Naive thymus-derived CD8-positive, alpha-beta T cell (primary cell): ENCODE measurements at regions of chr2 and their contacts with region 1.

Region 1: DNA sequence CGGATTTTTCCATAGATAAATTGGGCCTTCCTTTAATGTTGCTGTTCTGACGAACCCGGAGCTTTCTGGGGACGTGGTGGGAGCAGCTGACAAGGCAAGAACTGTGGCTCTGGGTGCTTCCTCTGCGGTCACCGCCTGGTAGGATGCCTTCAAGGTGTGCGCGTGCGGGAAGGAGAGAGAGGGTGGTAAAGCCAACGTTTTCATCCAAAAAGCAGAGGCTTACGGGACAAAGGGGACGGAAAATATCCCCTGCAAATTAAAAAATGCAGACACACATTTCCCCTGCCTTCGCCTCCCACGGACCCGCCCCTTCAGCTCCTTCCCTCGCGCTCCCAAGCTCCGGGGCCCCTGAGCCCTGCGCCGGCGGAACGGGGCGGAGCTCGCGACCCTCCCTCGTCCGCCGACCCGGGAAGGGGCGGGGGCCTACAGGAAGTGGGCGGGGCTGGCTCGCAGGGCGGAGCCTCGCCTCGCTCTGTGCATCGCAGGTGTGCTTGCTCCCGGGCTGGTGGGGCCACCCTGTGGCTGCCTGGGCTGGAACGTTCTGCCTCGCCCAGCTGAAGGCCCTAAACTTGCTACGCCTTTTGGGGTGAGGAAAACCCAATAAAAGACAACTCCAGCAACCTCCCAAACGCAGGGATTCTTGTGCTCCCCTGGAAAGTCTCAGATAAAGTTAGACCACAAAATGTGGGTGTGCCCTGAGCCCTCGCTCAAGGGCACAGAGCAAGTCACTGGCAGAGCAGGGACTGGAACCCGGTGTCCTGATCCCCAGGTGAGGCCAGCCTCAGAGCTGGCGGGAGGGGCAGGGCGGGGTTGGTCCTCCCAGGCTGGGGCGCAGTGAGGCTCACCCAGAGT is 25.4 kb upstream of the SLC66A3 start:
- DNase-seq: peak; percentile 74 to 89 (median 83)
- ATAC-seq: peak; percentile 88
- H3K4me3 Mint-ChIP-seq: peak overlapping the region; percentile 68 to 85 (median 80)
- H3K27ac Mint-ChIP-seq: peak overlapping the region; percentile 43 to 92 (median 83)
- H3K4me1 Mint-ChIP-seq: peaks cover 4 to 36% (median 19%) of the 10 kb centered on the region in 4 donors
- H3K27me3 Mint-ChIP-seq: no peaks in the 10 kb centered on the region

Region 2: GRCh38 chr2:11103984-11104793 is 25.6 kb before region 1 on chr2:
- POLR2A ChIA-PET with region 1: no interaction called
- DNase-seq: no peak
- ATAC-seq: no peak
- H3K4me3 Mint-ChIP-seq: peak overlapping the region in 3 of 10 donors; percentile 2 to 80 (median 28)
- H3K27ac Mint-ChIP-seq: peak overlapping the region in 3 of 10 donors; percentile 35 to 54 (median 48)
- H3K4me1 Mint-ChIP-seq: peaks cover 0 to 20% (median 3%) of the 10 kb centered on the region in 4 donors
- H3K27me3 Mint-ChIP-seq: peaks cover 0 to 13% (median 0%) of the 10 kb centered on the region in 5 donors

Region 3: GRCh38 chr2:11154923-11155380 is 25.1 kb after region 1 on chr2:
- POLR2A ChIA-PET with region 1: interaction called, 22 read pairs
- DNase-seq: peak; percentile 88 to 99 (median 97)
- ATAC-seq: peak; percentile 87 to 91
- H3K4me3 Mint-ChIP-seq: peak overlapping the region; percentile 71 to 89 (median 85)
- H3K27ac Mint-ChIP-seq: peak overlapping the region; percentile 63 to 94 (median 92)
- H3K4me1 Mint-ChIP-seq: peaks cover 6 to 29% (median 22%) of the 10 kb centered on the region in 4 donors
- H3K27me3 Mint-ChIP-seq: no peaks in the 10 kb centered on the region

Region 4: DNA sequence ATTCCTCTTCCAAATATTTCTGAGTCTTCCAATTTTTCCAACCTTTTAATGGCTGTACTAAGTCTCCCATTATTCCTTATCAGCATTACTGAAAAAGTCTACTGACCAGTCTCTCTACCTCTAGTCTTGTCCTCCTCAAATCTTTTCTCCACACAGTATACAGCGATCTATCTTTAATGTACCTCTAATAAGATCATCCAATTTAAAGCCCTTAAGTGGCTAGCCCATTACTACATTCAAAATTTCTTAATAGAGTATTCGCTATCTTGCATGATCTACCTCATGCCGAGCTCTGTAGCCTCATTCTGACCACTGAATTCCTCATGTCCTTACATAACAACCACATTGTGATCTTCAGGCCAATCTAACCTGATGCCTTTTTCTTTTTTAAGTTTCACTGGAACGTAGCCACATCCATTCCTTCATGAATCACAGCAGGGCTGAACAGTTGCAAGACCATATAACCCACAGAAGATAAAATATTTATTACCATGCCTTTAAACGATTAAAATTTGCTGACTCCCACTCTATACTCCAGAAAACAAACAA is 83.3 kb after region 1 on chr2:
- POLR2A ChIA-PET with region 1: no interaction called
- DNase-seq: no peak
- ATAC-seq: no peak
- H3K4me3 Mint-ChIP-seq: no peak overlapping the region
- H3K27ac Mint-ChIP-seq: no peak overlapping the region
- H3K4me1 Mint-ChIP-seq: no peaks in the 10 kb centered on the region
- H3K27me3 Mint-ChIP-seq: no peaks in the 10 kb centered on the region

Region 5: DNA sequence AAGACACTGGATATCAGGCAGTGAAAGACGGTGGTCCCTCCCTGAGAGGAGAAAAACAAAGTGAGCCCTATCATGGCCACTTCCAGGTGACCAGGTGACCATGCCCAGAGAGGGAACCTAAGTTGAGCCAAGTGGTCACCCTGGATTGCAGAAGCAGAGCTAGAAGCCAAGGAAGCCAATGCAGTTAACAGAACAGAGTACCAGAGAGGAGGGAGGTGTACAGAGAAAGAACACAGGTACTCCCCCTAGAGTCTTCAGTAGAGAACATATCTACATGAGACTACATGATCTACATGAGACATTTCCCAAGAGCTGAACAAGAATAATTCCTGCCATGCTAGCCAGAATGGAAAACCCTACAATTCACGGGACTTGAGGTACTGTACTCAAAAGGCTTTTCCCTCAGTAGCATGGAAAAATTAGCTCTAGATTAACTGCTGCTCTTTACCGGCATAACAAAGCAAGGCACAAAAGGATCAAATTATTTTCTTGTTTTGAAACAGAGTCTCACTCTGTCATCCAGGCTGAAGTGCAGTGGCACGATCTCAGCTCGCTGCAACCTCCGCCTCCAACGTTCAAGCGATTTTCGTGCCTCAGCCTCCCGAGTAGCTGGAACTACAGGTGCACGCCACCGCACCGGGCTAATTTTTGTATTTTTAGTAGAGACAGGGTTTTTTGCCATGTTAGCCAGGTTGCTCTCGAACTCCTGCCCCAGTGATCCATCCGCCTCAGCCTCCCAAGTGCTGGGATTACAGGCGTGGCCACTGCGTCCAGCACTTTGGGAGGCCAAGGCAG is 191.1 kb after region 1 on chr2:
- POLR2A ChIA-PET with region 1: no interaction called
- DNase-seq: no peak
- ATAC-seq: no peak
- H3K4me3 Mint-ChIP-seq: no peak overlapping the region
- H3K27ac Mint-ChIP-seq: no peak overlapping the region
- H3K4me1 Mint-ChIP-seq: peaks cover 11 to 32% (median 18%) of the 10 kb centered on the region in 4 donors
- H3K27me3 Mint-ChIP-seq: no peaks in the 10 kb centered on the region

Region 6: GRCh38 chr2:11344342-11344955 is 214.6 kb after region 1 on chr2 and contains the start of gene ROCK2:
- POLR2A ChIA-PET with region 1: interaction called, 13 read pairs
- DNase-seq: peak; percentile 28 to 70 (median 54)
- ATAC-seq: peak; percentile 64
- H3K4me3 Mint-ChIP-seq: peak within 1 kb of the TSS; percentile 93 to 100 (median 98)
- H3K27ac Mint-ChIP-seq: peak within 1 kb of the TSS; percentile 84 to 97 (median 94)
- H3K4me1 Mint-ChIP-seq: peaks cover 15 to 42% (median 33%) of the 10 kb centered on the region in 4 donors
- H3K27me3 Mint-ChIP-seq: no peaks in the 10 kb centered on the region
- polyA plus RNA-seq, gene ROCK2: 6.1 to 7.6 (median 7.1) TPM

Region 7: DNA sequence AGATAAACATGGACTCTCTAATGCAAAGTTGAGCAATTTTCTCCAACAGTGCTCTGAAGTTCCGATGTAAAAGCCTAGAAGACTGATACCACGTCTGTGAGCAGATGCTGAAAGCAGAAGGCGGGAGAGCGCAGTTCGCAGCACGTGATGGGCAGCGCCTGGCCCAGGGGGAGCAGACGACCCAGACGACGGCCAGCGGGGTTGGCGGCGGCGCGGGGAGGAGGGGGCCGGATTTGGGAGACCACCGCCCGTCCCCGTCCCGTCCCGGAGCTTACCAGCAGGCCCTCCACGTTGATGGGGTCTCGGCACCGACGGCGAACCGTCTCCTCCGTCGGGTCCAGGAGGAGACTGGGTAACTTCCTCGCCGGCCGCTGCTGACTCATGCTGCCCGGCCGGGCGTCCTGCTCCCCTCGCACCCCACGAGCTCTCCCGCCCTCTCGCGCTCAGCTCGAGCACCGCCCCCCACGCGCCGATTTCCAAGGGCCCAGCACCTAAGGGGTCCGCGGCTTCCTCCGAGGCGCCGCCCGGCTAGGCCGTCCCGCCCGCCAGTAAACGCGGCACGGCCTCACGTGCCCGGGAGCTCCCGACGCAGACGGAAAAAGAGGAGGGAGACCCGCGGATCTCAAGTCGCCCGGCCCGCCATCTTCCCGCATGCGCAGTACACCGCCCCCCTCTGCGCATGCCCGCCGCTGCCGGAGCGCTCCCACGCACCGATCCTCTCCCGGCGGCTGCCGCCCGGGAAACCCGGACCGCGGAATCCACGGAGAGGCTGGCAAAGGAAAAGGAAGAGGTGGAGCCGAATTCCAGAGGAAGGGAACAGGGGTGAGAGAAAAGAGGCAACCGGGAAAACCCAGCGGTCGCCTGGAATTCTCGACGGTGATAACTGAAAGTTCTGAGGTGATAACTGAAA is 335.9 kb after region 1 on chr2 and contains the start of gene E2F6:
- POLR2A ChIA-PET with region 1: interaction called, 19 read pairs
- DNase-seq: peak; percentile 67 to 90 (median 86)
- ATAC-seq: peak; percentile 80 to 82
- H3K4me3 Mint-ChIP-seq: peak within 1 kb of the TSS; percentile 87 to 97 (median 94)
- H3K27ac Mint-ChIP-seq: peak within 1 kb of the TSS; percentile 88 to 95 (median 91)
- H3K4me1 Mint-ChIP-seq: peaks cover 16 to 40% (median 38%) of the 10 kb centered on the region in 4 donors
- H3K27me3 Mint-ChIP-seq: no peaks in the 10 kb centered on the region
- polyA plus RNA-seq, gene E2F6: 2.3 to 4.6 (median 3.2) TPM